Dorsolateral prefrontal cortex (tissue), 120 donors: ENCODE measurements at regions of chr7 and their contacts with region 1.

Region 1: DNA sequence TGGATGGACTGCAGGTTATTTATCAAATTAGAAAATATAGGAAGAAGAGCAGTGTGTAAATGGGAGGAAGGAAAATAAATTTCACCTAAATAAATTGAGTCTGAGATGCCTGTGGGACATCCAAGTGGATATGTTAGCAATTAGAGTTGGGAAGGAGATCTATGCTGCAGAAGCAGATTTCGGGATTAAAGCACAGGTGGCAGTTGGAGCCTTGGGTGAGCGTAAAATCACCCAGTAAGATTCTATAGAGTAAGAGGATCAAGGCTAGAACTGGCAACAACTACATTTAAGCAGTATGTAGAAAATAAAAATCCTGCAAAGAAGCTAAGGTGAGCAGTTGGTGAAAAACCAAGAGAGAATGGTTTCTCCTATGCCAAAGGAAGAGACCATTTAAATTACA is 8.4 kb downstream of the TRIM4 start:
- DNase-seq: no peak
- H3K4me3 ChIP-seq: no peak overlapping the region
- H3K27ac ChIP-seq: no peak overlapping the region
- H3K27me3 ChIP-seq: no peaks in the 10 kb centered on the region
- CTCF ChIP-seq: no peak

Region 2: DNA sequence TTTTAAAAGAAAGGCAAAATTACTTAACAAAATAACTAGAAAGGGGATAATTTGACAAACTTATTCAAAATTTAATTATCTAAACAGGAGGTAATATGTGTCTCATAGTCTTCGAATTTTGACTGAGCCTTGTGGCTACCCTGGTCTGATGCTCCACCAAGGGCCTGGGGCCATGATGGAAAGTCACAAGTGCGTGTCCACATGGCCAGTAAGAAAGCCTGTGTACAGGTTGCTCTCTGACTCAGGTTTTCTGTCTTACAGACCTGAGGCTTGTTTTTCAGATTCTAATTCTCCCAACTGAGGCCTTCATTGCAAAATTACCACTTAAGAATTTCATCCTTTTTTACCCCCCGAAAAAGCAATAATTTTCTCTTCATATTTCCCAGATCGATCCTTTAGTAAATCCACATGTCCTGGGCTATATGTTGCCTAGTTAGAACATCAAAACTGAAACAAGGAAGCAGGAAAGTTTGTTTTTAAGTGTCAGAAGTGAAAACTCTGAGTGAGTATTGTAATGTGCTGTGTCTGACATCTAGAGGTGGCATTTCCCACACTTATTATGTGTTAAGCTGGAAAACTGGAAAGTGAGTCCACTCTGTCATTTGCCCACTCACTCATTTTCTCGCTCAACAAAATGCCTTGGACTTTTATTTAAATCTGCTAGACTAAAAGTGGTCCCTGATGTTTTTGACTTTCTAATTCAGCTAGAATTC is 73.2 kb before region 1 on chr7:
- intact Hi-C with region 1: no loop called
- DNase-seq: no peak
- H3K4me3 ChIP-seq: no peak overlapping the region
- H3K27ac ChIP-seq: no peak overlapping the region
- H3K27me3 ChIP-seq: no peaks in the 10 kb centered on the region
- CTCF ChIP-seq: peak in 7 of 56 donors; percentile 3 to 41 (median 9)

Region 3: GRCh38 chr7:99990460-99990852 is 79.5 kb after region 1 on chr7:
- intact Hi-C with region 1: loop called (anchors 2 to 5 kb)
- DNase-seq: peak in 1 of 10 donors; percentile 35
- H3K4me3 ChIP-seq: peak overlapping the region in 58 of 59 donors; percentile 19 to 69 (median 53)
- H3K27ac ChIP-seq: peak overlapping the region in 30 of 59 donors; percentile 2 to 82 (median 60)
- H3K27me3 ChIP-seq: no peaks in the 10 kb centered on the region
- CTCF ChIP-seq: no peak